Vagina (tissue), 2 donors: ENCODE measurements at regions of chr3 and their contacts with region 1.

Region 1: GRCh38 chr3:147218965-147219364 is 187.4 kb downstream of the ZIC4 start:
- DNase-seq: no peak
- H3K4me3 ChIP-seq: no peak overlapping the region
- H3K27ac ChIP-seq: no peak overlapping the region
- H3K4me1 ChIP-seq: no peaks in the 10 kb centered on the region
- H3K27me3 ChIP-seq: no peaks in the 10 kb centered on the region
- CTCF ChIP-seq: no peak
- POLR2A ChIP-seq: no peak

Region 2: DNA sequence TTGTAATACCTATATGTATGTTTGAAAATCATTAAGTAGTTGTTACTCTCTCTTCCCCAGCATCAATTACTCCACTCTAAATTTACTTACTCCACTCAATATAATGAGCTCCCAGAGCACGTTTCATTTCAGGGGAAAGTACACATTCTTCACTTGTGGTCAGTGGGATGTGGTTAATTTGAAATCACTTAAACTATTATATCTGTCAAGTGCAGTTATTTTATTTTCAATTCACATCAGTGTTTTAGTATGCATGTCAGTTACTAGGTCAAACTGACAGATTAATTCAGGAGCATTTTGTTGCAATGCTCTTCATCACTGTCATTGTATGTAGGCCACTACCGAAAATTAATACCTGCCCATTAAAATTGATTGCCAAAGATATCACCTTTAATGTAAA is 188.7 kb before region 1 on chr3:
- intact Hi-C with region 1: no loop called
- DNase-seq: no peak
- H3K4me3 ChIP-seq: no peak overlapping the region
- H3K27ac ChIP-seq: no peak overlapping the region
- H3K4me1 ChIP-seq: no peaks in the 10 kb centered on the region
- H3K27me3 ChIP-seq: no peaks in the 10 kb centered on the region
- CTCF ChIP-seq: no peak
- POLR2A ChIP-seq: no peak

Region 3: GRCh38 chr3:148344522-148344921 is 1125.6 kb after region 1 on chr3:
- intact Hi-C with region 1: loop called (anchors 5 kb)
- DNase-seq: no peak
- H3K4me3 ChIP-seq: no peak overlapping the region
- H3K27ac ChIP-seq: no peak overlapping the region
- H3K4me1 ChIP-seq: no peaks in the 10 kb centered on the region
- H3K27me3 ChIP-seq: no peaks in the 10 kb centered on the region
- CTCF ChIP-seq: no peak
- POLR2A ChIP-seq: no peak